Naive thymus-derived CD4-positive, alpha-beta T cell (primary cell): ENCODE measurements at regions of chr14 and their contacts with region 1.

Region 1: DNA sequence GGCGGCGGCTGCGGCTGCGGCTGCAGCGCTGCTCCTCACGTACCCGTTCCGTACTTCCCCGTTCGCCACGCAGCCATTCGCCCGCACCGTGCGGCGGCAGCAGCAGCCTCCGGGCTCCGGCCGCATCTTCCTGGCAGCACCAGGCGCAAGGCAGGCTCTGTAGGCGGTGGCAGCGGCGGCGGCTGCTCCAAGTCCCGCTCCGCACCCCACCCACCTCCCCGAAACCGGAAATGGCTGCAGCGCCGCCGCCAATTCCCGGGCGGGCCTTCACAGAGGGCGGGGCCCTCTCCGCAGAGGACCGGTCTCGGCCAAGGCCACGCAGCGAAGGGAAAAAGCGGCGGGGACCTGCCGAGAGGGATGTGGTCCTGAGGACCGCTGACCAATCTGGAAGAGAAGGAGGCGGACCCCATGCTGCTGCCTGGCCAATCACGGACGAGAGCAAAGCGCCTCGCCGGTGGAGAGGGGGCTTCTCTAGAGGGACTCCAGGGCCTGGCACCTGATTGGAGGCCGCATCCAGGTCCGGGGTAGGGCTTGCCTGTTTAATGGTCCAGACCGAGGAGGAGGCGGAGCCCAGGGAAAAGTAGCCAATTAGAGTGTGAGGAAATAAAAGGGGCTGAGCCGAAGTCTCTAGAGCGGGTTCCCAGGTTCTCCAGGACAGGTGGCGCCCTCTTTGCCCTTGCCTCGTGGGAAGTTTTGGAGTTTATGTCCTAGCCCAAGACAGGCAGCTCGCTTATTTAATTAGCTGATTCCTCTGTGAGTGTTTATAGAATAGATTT is at the start of gene SPTLC2:
- DNase-seq: peak; percentile 78 to 99 (median 96)
- ATAC-seq: peak; percentile 98
- H3K4me3 ChIP-seq: peak within 1 kb of the TSS; percentile 55
- H3K4me3 Mint-ChIP-seq: peak within 1 kb of the TSS; percentile 85 to 97 (median 92)
- H3K27ac ChIP-seq: peak within 1 kb of the TSS; percentile 69
- H3K27ac Mint-ChIP-seq: peak within 1 kb of the TSS; percentile 45 to 91 (median 86)
- H3K4me1 ChIP-seq: peaks cover 4 to 5% of the 10 kb centered on the region in 2 donors
- H3K4me1 Mint-ChIP-seq: peaks cover 29 to 52% (median 40%) of the 10 kb centered on the region in 7 donors
- H3K27me3 ChIP-seq: no peaks in the 10 kb centered on the region
- H3K27me3 Mint-ChIP-seq: peaks cover 0 to 4% (median 0%) of the 10 kb centered on the region in 5 donors
- total RNA-seq, gene SPTLC2: 19.0 to 58.1 (median 25.7) TPM

Region 2: DNA sequence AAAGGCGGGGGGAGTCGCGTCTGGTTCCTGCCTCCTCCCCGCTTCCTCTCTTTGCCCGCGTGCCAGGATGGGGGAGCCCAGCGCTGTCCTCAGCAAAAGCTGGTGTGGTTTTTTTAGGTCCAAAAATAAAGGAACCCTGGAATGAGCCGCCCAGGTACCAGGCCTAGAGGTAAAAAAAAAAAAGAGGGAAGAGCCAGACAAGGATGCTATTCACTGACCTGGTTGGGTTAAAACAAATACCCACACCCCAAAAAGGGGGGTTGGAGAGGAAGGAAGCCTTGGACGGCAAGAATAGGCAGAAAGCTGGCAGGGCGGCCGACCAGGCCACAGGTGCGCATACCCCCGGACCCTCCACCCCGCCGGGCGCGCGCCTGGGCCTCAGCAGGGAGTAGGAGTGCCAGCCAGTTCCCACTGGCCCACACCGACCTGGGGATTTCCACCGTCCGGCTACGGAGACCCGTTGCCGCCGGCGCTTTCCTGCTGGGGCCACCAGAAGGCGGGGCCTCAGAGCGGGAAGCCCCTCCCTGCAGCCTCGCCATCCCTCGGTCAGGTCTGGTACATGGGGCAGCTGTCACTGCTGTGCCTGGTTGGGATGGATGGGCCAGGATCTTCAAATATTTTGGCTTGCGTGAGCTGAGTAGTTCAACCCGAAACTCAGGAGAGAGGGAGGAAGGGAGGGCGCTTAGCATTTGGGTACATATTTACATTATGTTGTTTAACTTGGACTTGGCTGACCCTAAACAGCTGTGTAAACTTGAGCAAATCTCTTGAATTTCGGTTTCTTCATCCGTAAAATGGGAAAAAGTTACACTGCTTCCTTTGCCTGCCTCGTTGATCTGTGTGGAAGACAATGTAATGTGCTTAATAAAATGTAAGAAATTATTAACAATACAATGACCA is 582.8 kb before region 1 on chr14:
- CTCF ChIA-PET with region 1: no interaction called
- POLR2A ChIA-PET with region 1: no interaction called
- intact Hi-C with region 1: loop called in 1 of 2 experiments (anchors 10 kb)
- DNase-seq: peak in 7 of 9 donors; percentile 32 to 89 (median 47)
- ATAC-seq: peak; percentile 76
- H3K4me3 ChIP-seq: peak overlapping the region; percentile 79
- H3K4me3 Mint-ChIP-seq: peak overlapping the region; percentile 81 to 93 (median 90)
- H3K27ac ChIP-seq: peak overlapping the region; percentile 95
- H3K27ac Mint-ChIP-seq: peak overlapping the region; percentile 92 to 98 (median 94)
- H3K4me1 ChIP-seq: peaks cover 37 to 67% of the 10 kb centered on the region in 2 donors
- H3K4me1 Mint-ChIP-seq: peaks cover 45 to 85% (median 78%) of the 10 kb centered on the region in 7 donors
- H3K27me3 ChIP-seq: no peaks in the 10 kb centered on the region
- H3K27me3 Mint-ChIP-seq: no peaks in the 10 kb centered on the region

Region 3: GRCh38 chr14:77376771-77377501 is 239.7 kb before region 1 on chr14 and contains the starts of genes SAMD15 and TMED8:
- CTCF ChIA-PET with region 1: no interaction called
- POLR2A ChIA-PET with region 1: no interaction called
- intact Hi-C with region 1: loop called (anchors 1 to 2 kb)
- DNase-seq: peak; percentile 77 to 88 (median 83)
- ATAC-seq: peak; percentile 96
- H3K4me3 ChIP-seq: peak within 1 kb of the TSS; percentile 99
- H3K4me3 Mint-ChIP-seq: peak within 1 kb of the TSS in 7 of 10 donors; percentile 88 to 97 (median 93)
- H3K27ac ChIP-seq: peak within 1 kb of the TSS; percentile 87
- H3K27ac Mint-ChIP-seq: peak within 1 kb of the TSS; percentile 52 to 93 (median 77)
- H3K4me1 ChIP-seq: peaks cover 14 to 18% of the 10 kb centered on the region in 2 donors
- H3K4me1 Mint-ChIP-seq: peaks cover 17 to 41% (median 39%) of the 10 kb centered on the region in 7 donors
- H3K27me3 ChIP-seq: no peaks in the 10 kb centered on the region
- H3K27me3 Mint-ChIP-seq: peaks cover 0 to 10% (median 0%) of the 10 kb centered on the region in 5 donors
- total RNA-seq, gene SAMD15: 0.27 to 0.46 (median 0.42) TPM in 3 of 5 experiments, not detected in the others
- total RNA-seq, gene TMED8: 5.5 to 18.6 (median 7.0) TPM

Region 4: DNA sequence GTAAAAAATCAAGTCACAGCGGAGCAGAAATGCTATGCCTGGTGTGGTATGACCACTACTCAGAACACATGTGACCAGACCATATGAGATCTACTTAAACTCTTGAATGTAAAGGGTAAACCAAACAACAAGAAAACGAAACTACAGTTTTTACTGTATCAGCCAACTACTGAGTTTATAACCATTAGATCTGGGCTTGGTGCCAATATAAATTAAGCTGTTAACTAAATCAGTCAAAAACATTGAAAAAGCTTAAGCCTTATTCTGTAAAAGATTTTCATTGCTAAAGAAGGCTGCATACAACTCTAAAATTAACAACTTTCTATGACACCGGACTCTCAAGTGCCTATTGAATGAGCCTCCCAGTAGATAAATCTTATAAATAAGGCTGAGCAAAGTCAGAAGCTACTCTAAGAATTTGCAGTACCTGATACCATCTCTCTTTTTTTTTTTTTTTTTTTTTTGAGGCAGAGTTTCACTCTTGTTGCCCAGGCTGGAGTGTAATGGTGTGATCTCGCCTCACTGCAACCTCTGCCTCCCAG is 35.6 kb before region 1 on chr14:
- CTCF ChIA-PET with region 1: no interaction called
- POLR2A ChIA-PET with region 1: interaction called, 3 read pairs
- intact Hi-C with region 1: loop called (anchors 5 kb)
- DNase-seq: peak in 6 of 9 donors; percentile 20 to 55 (median 36)
- ATAC-seq: peak; percentile 76
- H3K4me3 ChIP-seq: peak overlapping the region; percentile 6
- H3K4me3 Mint-ChIP-seq: peak overlapping the region; percentile 34 to 68 (median 58)
- H3K27ac ChIP-seq: no peak overlapping the region
- H3K27ac Mint-ChIP-seq: peak overlapping the region in 8 of 9 donors; percentile 28 to 86 (median 62)
- H3K4me1 ChIP-seq: peaks cover 5 to 7% of the 10 kb centered on the region in 2 donors
- H3K4me1 Mint-ChIP-seq: peaks cover 17 to 53% (median 39%) of the 10 kb centered on the region in 7 donors
- H3K27me3 ChIP-seq: no peaks in the 10 kb centered on the region
- H3K27me3 Mint-ChIP-seq: no peaks in the 10 kb centered on the region

Region 5: DNA sequence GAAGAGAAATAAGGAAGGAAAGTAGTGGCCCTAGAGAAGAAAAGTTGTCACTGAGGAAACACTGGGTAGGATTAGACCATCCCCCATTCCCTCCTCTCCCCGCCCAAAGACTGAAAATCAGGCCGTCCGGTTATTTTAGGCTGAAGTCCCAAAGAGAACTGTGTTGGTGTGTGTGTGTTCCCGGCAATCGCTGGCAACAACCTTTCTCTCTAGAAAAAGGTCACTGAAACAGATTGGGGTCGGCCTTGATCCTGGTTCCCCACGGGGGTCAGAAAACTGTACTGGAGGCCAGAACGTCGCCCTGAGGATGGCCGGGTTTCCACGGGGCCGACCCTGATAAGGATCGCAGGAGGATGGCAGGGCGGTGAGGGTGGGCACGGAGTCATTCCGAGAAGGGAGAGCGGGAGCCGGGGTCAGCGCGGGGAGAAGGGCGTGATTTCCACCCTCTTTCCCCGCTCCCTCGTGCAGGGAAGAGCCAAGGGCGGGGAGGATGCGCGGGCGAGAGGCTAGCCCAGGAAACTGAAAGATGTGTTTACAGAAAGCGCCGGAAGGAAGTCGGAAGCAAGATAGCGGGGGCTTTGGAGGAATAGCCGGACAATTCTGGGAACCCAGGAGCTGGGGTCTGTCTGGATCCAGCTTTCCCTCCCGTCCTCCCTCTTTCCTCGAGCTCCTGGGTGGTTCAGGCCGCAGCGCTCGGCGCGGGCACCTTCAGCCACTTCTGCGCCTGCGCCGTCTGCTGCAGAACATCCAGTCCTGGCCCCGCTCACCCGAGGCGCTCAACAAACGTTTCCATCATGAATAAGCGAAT is 25.1 kb after region 1 on chr14:
- CTCF ChIA-PET with region 1: no interaction called
- POLR2A ChIA-PET with region 1: interaction called, 4 read pairs
- intact Hi-C with region 1: loop called (anchors 1 to 2 kb)
- DNase-seq: peak; percentile 33 to 68 (median 59)
- ATAC-seq: peak; percentile 80
- H3K4me3 ChIP-seq: peak overlapping the region; percentile 84
- H3K4me3 Mint-ChIP-seq: peak overlapping the region; percentile 84 to 95 (median 92)
- H3K27ac ChIP-seq: peak overlapping the region; percentile 70
- H3K27ac Mint-ChIP-seq: peak overlapping the region; percentile 90 to 97 (median 92)
- H3K4me1 ChIP-seq: peaks cover 8% of the 10 kb centered on the region in 2 donors
- H3K4me1 Mint-ChIP-seq: peaks cover 0 to 19% (median 16%) of the 10 kb centered on the region in 7 donors
- H3K27me3 ChIP-seq: no peaks in the 10 kb centered on the region
- H3K27me3 Mint-ChIP-seq: peaks cover 0 to 3% (median 0%) of the 10 kb centered on the region in 5 donors

Region 6: GRCh38 chr14:77760381-77761246 is 144.0 kb after region 1 on chr14 and contains the start of gene SNW1:
- CTCF ChIA-PET with region 1: no interaction called
- POLR2A ChIA-PET with region 1: no interaction called
- intact Hi-C with region 1: loop called (anchors 1 kb)
- DNase-seq: peak; percentile 80 to 94 (median 90)
- ATAC-seq: peak; percentile 95
- H3K4me3 ChIP-seq: peak within 1 kb of the TSS; percentile 94
- H3K4me3 Mint-ChIP-seq: peak within 1 kb of the TSS; percentile 91 to 97 (median 95)
- H3K27ac ChIP-seq: peak within 1 kb of the TSS; percentile 97
- H3K27ac Mint-ChIP-seq: peak within 1 kb of the TSS; percentile 92 to 99 (median 98)
- H3K4me1 ChIP-seq: peaks cover 28 to 30% of the 10 kb centered on the region in 2 donors
- H3K4me1 Mint-ChIP-seq: peaks cover 26 to 60% (median 42%) of the 10 kb centered on the region in 7 donors
- H3K27me3 ChIP-seq: no peaks in the 10 kb centered on the region
- H3K27me3 Mint-ChIP-seq: no peaks in the 10 kb centered on the region
- total RNA-seq, gene SNW1: 84.4 to 108 (median 97.7) TPM

Region 7: GRCh38 chr14:78043349-78043748 is 426.7 kb after region 1 on chr14:
- CTCF ChIA-PET with region 1: no interaction called
- POLR2A ChIA-PET with region 1: no interaction called
- intact Hi-C with region 1: no loop called
- DNase-seq: no peak
- ATAC-seq: no peak
- H3K4me3 ChIP-seq: no peak overlapping the region
- H3K4me3 Mint-ChIP-seq: no peak overlapping the region
- H3K27ac ChIP-seq: no peak overlapping the region
- H3K27ac Mint-ChIP-seq: no peak overlapping the region
- H3K4me1 ChIP-seq: no peaks in the 10 kb centered on the region
- H3K4me1 Mint-ChIP-seq: no peaks in the 10 kb centered on the region
- H3K27me3 ChIP-seq: no peaks in the 10 kb centered on the region
- H3K27me3 Mint-ChIP-seq: peaks cover 3 to 41% (median 30%) of the 10 kb centered on the region in 5 donors